ENCODE measurements at regions of chr1 and their contacts with region 1.

Region 1: DNA sequence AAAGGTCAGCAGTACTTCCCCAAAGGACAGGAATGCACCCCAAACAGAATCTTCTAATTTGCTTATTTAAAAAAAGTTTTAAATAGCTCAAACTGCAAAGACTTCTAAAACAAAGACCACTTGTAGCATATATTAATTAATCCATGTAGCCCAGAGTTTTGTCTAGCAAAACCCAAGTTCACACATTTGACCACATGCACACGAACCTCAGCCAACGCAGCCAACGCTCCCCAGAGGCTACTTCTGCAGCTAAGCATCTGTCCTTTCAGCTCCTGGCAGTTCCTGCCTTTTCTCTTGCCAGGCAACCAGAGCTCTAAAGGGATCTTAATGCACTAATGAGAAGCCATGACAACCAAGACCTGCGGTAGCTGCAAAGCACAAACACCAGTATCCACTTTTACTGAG is 89.6 kb downstream of the RERE start:
- DNase-seq: no peak
- ATAC-seq: no peak
- H3K4me3 ChIP-seq: no peak overlapping the region
- H3K27ac ChIP-seq: no peak overlapping the region
- H3K4me1 ChIP-seq: no peaks in the 10 kb centered on the region
- H3K27me3 ChIP-seq: no peaks in the 10 kb centered on the region
- CTCF ChIP-seq: no peak

Region 2: GRCh38 chr1:8560611-8561544 is 166.9 kb before region 1 on chr1:
- intact Hi-C with region 1: loop called (anchors 2 kb)
- DNase-seq: no peak
- ATAC-seq: peak; percentile 90
- H3K4me3 ChIP-seq: no peak overlapping the region
- H3K27ac ChIP-seq: no peak overlapping the region
- H3K4me1 ChIP-seq: no peaks in the 10 kb centered on the region
- H3K27me3 ChIP-seq: no peaks in the 10 kb centered on the region
- CTCF ChIP-seq: peak; percentile 98

Region 3: DNA sequence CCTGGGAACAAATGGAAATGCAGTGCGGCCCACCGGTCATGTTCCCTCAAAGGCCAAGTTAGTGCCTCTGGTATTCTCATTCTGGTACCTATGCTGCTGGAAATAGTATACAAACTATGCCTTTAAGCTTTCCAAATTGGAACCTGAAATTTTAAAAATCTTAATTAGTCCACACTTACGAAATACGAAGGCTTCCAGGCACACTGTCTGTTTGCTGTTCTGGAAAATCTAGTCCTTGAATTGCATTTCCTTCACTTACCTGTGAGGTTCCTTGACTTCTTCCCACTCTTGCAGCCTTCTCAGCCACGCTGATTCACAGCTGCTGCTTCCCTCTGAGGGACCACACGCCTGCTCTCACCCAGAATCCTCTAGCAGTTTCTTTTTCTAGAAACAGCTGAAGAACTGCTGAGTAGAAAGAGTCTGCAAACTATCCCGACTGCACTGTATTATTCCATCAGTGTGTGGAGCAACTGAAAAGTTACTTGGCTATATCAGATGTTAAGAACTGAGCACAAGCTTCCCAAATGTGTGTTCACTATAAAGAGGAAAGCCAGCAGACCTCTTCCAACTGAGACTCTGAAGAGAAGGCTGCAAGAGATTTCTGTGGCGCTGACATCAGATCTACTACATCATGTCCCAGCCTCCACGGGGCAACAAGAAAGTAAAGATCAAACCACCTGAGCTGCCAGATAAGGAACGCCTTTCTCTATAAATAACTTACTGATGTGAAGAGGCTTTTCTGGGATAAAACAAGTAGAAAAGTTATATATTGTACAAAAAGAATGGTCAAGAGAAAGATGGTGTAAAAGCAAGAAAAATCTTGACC is 137.1 kb before region 1 on chr1:
- intact Hi-C with region 1: no loop called
- DNase-seq: no peak
- ATAC-seq: peak; percentile 27
- H3K4me3 ChIP-seq: no peak overlapping the region
- H3K27ac ChIP-seq: no peak overlapping the region
- H3K4me1 ChIP-seq: peaks cover 8% of the 10 kb centered on the region
- H3K27me3 ChIP-seq: no peaks in the 10 kb centered on the region
- CTCF ChIP-seq: no peak

Measured in upper lobe of right lung (tissue), 1 donor.